Naive thymus-derived CD4-positive, alpha-beta T cell (primary cell): ENCODE measurements at regions of chr9 and their contacts with region 1.

Region 1: DNA sequence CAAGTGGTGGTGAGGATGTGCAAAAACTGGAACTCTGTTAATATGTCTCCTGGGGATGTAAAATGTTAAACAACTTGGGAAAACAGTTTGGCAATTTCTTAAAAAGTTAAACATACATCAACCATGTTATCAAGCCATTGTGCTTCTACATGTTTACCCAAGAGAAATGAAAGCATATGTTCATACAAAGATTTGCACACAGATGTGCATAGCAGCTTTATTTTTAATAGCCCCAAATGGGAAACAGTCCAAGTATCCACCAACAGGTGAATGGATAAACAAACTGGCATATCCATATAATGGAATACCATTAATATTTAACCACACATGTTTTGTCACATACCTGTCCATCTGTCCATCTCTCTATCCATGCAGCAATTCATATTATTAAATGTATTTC is 6.2 kb downstream of the VPS13A start:
- DNase-seq: no peak
- ATAC-seq: no peak
- H3K4me3 ChIP-seq: no peak overlapping the region
- H3K4me3 Mint-ChIP-seq: no peak overlapping the region
- H3K27ac ChIP-seq: no peak overlapping the region
- H3K27ac Mint-ChIP-seq: no peak overlapping the region
- H3K4me1 ChIP-seq: peaks cover 5 to 11% of the 10 kb centered on the region in 2 donors
- H3K4me1 Mint-ChIP-seq: peaks cover 17 to 45% (median 29%) of the 10 kb centered on the region in 7 donors
- H3K27me3 ChIP-seq: no peaks in the 10 kb centered on the region
- H3K27me3 Mint-ChIP-seq: no peaks in the 10 kb centered on the region

Region 2: DNA sequence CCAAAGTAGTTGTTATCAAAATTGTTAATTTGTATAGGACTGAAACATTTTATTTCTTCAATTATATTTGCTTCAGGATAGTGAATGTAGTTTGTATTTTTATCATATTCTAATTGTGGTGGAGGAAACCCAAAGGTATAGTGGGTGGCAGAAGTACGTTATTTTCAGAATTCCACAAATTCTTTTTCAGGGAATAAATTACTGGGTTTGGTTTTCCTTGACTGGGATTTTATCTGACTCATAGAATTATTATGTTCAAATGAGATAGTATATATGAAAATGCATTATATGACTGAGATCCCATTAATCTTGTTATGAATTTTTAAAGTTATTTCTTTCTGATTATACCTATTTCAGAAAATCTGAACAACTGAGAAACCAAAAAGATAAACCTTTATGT is 67.5 kb after region 1 on chr9:
- CTCF ChIA-PET with region 1: no interaction called
- POLR2A ChIA-PET with region 1: no interaction called
- intact Hi-C with region 1: loop called in 1 of 2 experiments (anchors 10 kb)
- DNase-seq: no peak
- ATAC-seq: no peak
- H3K4me3 ChIP-seq: no peak overlapping the region
- H3K4me3 Mint-ChIP-seq: no peak overlapping the region
- H3K27ac ChIP-seq: no peak overlapping the region
- H3K27ac Mint-ChIP-seq: no peak overlapping the region
- H3K4me1 ChIP-seq: no peaks in the 10 kb centered on the region
- H3K4me1 Mint-ChIP-seq: no peaks in the 10 kb centered on the region
- H3K27me3 ChIP-seq: no peaks in the 10 kb centered on the region
- H3K27me3 Mint-ChIP-seq: no peaks in the 10 kb centered on the region